Esophagus squamous epithelium (tissue), 5 donors: ENCODE measurements at regions of chr6 and their contacts with region 1.

Region 1: DNA sequence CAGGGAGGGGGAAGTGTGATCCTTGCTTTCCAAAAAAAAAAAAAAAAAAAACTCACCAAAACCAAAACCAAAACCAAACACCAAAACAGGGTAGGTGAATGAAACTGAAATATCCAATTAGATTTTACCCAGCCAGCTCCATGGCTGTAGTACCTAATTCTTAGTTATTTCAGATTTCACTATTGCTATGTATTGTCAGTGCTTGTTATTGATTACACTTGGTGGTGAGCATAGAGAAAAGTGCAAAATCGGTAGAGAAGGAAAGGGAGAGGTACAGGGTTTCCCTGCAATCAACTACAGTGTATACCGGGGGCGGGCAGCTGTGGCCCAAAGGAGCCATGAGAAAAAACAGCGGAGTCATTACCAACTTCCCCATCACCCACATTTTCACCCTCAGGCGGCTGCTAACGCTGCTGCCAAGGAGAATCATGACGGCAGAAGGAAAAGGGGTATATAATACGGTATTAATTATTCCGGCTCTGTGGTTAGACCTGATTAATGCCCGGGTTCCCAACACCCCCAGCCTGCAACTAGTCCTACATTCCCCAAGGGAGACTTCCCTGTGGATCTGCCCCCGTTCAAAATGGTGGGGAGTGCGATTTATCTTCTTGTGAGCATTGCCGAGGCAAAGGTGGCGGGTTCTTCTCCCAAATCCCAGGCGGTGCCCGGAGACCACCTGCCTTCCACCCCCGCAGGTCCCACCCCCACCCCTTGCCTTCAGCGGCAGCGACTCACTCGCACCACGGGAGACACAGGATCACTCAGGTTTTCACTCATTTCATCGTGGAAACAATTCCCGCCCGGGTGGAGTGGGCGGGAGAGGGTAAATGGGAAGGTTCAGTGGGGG is at the start of gene C6orf62:
- DNase-seq: no peak
- H3K4me3 ChIP-seq: peak within 1 kb of the TSS; percentile 74 to 100 (median 92)
- H3K27ac ChIP-seq: peak within 1 kb of the TSS; percentile 96 to 100 (median 100)
- H3K4me1 ChIP-seq: peaks cover 10 to 56% (median 36%) of the 10 kb centered on the region in 3 donors
- H3K27me3 ChIP-seq: no peaks in the 10 kb centered on the region
- CTCF ChIP-seq: no peak
- POLR2A ChIP-seq: no peak
- total RNA-seq, gene C6orf62: 38.5 to 82.9 (median 54.8) TPM

Region 2: DNA sequence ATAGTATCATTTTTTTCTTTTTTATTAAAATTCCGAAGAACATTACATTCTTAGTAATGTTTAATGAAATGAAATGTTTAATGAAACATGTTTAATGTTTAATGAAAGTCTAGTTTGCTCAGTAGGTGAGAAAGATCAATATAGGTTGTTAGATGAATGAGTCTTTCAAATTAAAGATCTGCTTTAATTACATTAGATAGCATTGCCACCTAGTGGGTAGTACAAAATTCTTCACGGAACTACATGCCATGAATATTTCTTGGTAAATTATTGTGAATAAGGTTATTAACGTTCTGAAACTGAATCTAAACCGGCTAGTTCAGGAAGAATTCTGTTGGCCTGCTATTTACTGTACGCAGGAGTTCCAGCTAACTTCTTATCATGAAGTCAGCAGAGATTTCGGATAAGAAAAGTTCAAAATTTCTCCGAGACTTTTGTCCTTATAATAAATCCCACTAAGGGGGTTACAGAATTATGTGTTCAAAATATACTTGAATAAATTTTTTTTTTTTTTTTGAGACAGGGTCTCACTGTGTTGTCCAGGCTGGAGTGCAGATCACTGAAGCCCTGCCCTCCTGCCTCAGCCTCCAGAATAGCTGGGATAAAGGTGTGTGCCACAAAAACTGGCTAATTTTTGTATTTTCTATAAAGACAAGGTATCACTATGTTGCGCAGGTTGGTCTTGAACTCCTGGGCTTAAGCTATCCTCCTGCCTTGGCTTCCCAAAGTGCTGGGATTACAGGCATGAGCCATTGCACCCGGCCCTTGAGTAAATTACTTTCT is 47.5 kb after region 1 on chr6:
- intact Hi-C with region 1: loop called (anchors 10 kb)
- DNase-seq: no peak
- H3K4me3 ChIP-seq: no peak overlapping the region
- H3K27ac ChIP-seq: no peak overlapping the region
- H3K4me1 ChIP-seq: no peaks in the 10 kb centered on the region
- H3K27me3 ChIP-seq: no peaks in the 10 kb centered on the region
- CTCF ChIP-seq: peak in 5 of 6 experiments; percentile 23 to 70 (median 45)
- POLR2A ChIP-seq: no peak

Region 3: DNA sequence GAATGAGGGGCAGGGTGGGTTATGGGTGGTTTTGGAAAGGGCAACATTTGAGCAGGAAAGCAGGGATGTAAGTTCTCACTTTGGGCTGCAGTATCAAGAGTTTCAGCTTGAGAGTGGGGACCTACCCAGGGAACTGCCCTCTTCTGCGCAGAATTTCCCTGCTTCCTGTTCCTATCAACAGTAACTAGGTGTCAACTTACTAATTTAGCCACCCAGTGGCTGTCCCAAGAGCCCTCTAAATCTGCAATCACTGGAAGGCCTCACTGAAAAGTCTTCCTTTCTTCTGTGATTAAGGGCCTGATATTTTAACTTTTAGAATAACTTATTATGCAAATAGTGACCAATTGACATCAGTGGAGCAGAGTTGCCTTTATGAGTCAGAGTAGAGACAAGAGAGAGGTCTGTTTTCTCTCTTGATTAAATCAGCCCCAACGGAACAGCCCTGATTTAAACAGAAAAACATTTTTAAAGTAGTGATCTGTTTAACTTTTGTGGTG is 334.6 kb after region 1 on chr6:
- intact Hi-C with region 1: no loop called
- DNase-seq: no peak
- H3K4me3 ChIP-seq: no peak overlapping the region
- H3K27ac ChIP-seq: peak overlapping the region in 1 of 4 donors; percentile 5
- H3K4me1 ChIP-seq: peaks cover 0 to 39% (median 3%) of the 10 kb centered on the region in 3 donors
- H3K27me3 ChIP-seq: no peaks in the 10 kb centered on the region
- CTCF ChIP-seq: no peak
- POLR2A ChIP-seq: no peak

Region 4: DNA sequence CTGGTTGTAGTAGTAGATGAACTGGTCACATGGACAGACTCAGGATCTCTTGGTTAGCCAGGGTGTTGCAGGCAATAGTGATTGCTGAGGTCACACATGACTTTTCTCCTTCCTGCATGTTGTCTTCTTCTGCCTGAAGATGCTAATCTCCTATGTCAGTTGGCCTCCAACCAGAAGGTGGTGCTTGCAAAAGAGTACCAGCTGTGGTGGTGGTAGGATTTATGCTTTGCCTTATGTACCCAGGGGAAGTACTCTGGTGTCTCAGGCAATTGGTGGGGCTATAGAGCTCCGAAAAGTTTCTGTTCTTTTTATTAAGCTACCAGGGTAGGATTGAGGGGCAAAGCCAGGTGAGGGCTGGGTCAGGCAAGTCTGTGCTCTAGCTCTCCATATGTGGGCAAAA is 658.3 kb after region 1 on chr6:
- intact Hi-C with region 1: no loop called
- DNase-seq: no peak
- H3K4me3 ChIP-seq: no peak overlapping the region
- H3K27ac ChIP-seq: no peak overlapping the region
- H3K4me1 ChIP-seq: no peaks in the 10 kb centered on the region
- H3K27me3 ChIP-seq: no peaks in the 10 kb centered on the region
- CTCF ChIP-seq: no peak
- POLR2A ChIP-seq: no peak